ENCODE measurements at regions of chr13 and their contacts with region 1.

Region 1: DNA sequence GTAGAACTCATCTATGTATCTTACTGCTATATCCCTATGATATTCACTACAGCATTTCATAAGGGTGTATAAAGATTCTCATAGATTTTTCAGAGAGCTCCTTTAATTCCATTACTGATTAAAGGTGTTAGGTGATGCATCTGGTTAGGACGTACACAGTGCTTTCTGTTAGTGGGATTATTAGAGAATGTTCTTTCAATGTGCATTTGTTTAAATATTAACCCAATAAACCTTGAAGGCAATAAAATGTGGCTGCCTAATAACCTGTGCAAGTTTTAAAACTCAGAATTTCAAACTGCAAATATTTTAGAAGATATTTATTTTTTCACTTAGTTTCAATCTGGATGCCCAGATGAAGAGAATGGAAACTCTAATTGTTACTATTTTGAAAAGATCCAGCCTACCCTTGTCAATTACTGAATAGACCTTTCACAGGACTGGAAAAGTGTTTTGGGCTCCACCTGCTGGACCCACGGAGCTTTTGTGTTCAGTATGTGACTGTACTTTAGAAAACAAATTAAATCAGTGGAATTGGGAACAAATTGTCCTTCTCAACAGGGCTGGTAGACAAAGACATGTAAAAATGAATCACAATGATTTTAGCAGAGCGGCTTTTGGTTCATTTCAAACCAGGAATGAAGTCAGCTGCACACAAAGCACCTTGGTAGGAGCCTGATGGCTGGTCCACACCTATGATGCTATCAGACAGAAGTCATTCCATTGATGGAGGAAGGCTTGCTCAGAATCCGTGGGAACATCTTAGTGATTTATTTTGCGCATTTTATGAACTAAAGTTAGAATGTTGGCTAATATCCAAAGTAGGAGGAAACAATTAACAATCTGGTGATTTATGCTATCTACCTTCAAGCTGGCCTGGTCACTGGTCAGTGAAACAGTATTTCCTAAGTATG is 89.4 kb upstream of the RAP2A start:
- DNase-seq: peak; percentile 58
- H3K4me3 ChIP-seq: no peak overlapping the region
- H3K27ac ChIP-seq: peak overlapping the region; percentile 31
- H3K4me1 ChIP-seq: peaks cover 57% of the 10 kb centered on the region
- H3K27me3 ChIP-seq: no peaks in the 10 kb centered on the region
- CTCF ChIP-seq: peak; percentile 83

Region 2: GRCh38 chr13:97116754-97117153 is 227.8 kb before region 1 on chr13:
- intact Hi-C with region 1: loop called (anchors 5 kb)
- DNase-seq: no peak
- H3K4me3 ChIP-seq: no peak overlapping the region
- H3K27ac ChIP-seq: peak overlapping the region; percentile 64
- H3K4me1 ChIP-seq: peaks cover 47% of the 10 kb centered on the region
- H3K27me3 ChIP-seq: no peaks in the 10 kb centered on the region
- CTCF ChIP-seq: no peak

Region 3: GRCh38 chr13:97221989-97222700 is 122.4 kb before region 1 on chr13 and contains the start of gene MBNL2:
- intact Hi-C with region 1: loop called (anchors 5 kb)
- DNase-seq: peak; percentile 89
- H3K4me3 ChIP-seq: peak within 1 kb of the TSS; percentile 74
- H3K27ac ChIP-seq: peak within 1 kb of the TSS; percentile 95
- H3K4me1 ChIP-seq: peaks cover 51% of the 10 kb centered on the region
- H3K27me3 ChIP-seq: no peaks in the 10 kb centered on the region
- CTCF ChIP-seq: no peak
- total RNA-seq, gene MBNL2: 76.5 TPM